ENCODE measurements at regions of chr19 and their contacts with region 1.

Region 1: DNA sequence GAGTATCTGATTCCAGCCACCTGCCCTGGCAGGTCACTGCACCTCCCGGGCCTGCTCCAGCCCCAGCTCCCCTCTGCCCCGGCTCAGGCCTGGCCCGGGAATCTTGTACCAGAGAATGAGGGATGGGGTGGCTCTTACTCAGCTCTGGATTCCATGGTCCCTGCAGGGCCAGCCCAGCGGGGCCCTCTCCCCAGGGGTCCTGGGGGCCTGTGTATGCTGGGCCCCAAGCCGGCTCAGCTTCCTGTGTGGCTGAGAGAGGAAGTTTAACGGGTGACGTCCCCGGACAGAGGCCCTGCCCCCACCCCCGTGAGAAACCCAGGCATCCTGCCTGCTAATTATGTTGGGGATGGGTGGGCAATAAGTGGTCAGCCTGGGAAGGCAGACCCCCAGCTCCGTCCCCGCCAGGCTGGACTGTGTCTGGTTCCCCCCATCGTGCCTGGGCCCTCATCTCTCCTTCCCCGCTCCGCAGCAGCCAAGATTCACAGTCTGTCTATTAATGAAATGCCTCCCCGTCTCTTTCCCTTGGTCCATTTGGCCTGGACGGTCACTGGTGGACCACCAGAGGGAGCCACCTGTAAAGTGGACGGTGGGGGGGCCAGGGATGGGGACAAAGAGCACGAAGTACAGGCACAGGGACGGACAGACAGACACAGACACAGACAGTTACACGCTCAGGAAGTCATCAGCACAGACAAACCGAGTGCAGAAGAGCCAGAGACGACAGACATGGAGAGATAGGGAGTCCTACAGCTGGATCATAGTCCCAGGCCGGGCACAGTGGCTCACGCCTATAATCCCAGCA is at the start of gene DENND1C:
- DNase-seq: peak; percentile 67
- ATAC-seq: peak; percentile 97
- H3K4me3 Mint-ChIP-seq: peak within 1 kb of the TSS; percentile 91
- H3K27ac Mint-ChIP-seq: peak within 1 kb of the TSS; percentile 89
- H3K4me1 Mint-ChIP-seq: peaks cover 29% of the 10 kb centered on the region
- H3K27me3 Mint-ChIP-seq: no peaks in the 10 kb centered on the region
- CTCF ChIP-seq: no peak
- total RNA-seq, gene DENND1C: 90.0 and 95.1 TPM in 2 replicates

Region 2: GRCh38 chr19:6460101-6460853 is 21.5 kb before region 1 on chr19:
- CTCF ChIA-PET with region 1: interaction called, 4 read pairs
- POLR2A ChIA-PET with region 1: interaction called, 25 read pairs
- intact Hi-C with region 1: loop called (anchors 1 kb)
- DNase-seq: peak; percentile 90
- ATAC-seq: peak; percentile 82
- H3K4me3 Mint-ChIP-seq: peak overlapping the region; percentile 90
- H3K27ac Mint-ChIP-seq: peak overlapping the region; percentile 79
- H3K4me1 Mint-ChIP-seq: peaks cover 42% of the 10 kb centered on the region
- H3K27me3 Mint-ChIP-seq: peaks cover 3% of the 10 kb centered on the region
- CTCF ChIP-seq: no peak

Region 3: GRCh38 chr19:6501740-6502648 is 20.3 kb after region 1 on chr19 and contains the start of gene TUBB4A:
- CTCF ChIA-PET with region 1: no interaction called
- POLR2A ChIA-PET with region 1: interaction called, 4 read pairs
- intact Hi-C with region 1: loop called (anchors 2 kb)
- DNase-seq: peak; percentile 65
- ATAC-seq: peak; percentile 78
- H3K4me3 Mint-ChIP-seq: peak within 1 kb of the TSS; percentile 87
- H3K27ac Mint-ChIP-seq: no peak within 1 kb of the TSS
- H3K4me1 Mint-ChIP-seq: peaks cover 23% of the 10 kb centered on the region
- H3K27me3 Mint-ChIP-seq: peaks cover 4% of the 10 kb centered on the region
- CTCF ChIP-seq: no peak
- total RNA-seq, gene TUBB4A: 13.2 and 16.8 TPM in 2 replicates

Measured in activated B cell treated with CpG ODN at 0.5 μM for 24 hours (primary cell).